ENCODE measurements at regions of chr1 and their contacts with region 1.

Region 1: GRCh38 chr1:54944610-54945544 is 35.6 kb upstream of the TMEM61 start:
- DNase-seq: peak; percentile 84
- ATAC-seq: peak; percentile 82
- H3K4me3 Mint-ChIP-seq: peak overlapping the region; percentile 12
- H3K27ac Mint-ChIP-seq: peak overlapping the region; percentile 54
- H3K4me1 Mint-ChIP-seq: peaks cover 19% of the 10 kb centered on the region
- H3K27me3 Mint-ChIP-seq: peaks cover 13% of the 10 kb centered on the region

Region 2: GRCh38 chr1:54886724-54887664 is 57.9 kb before region 1 on chr1 and contains the start of gene DHCR24:
- CTCF ChIA-PET with region 1: interaction called, 11 read pairs
- POLR2A ChIA-PET with region 1: no interaction called
- DNase-seq: peak; percentile 85
- ATAC-seq: peak; percentile 98
- H3K4me3 Mint-ChIP-seq: peak within 1 kb of the TSS; percentile 92
- H3K27ac Mint-ChIP-seq: peak within 1 kb of the TSS; percentile 89
- H3K4me1 Mint-ChIP-seq: peaks cover 46% of the 10 kb centered on the region
- H3K27me3 Mint-ChIP-seq: peaks cover 26% of the 10 kb centered on the region
- total RNA-seq, gene DHCR24: 140 to 151 TPM

Region 3: GRCh38 chr1:54934869-54935268 is 10.0 kb before region 1 on chr1:
- CTCF ChIA-PET with region 1: interaction called, 36 read pairs
- POLR2A ChIA-PET with region 1: no interaction called
- DNase-seq: no peak
- ATAC-seq: no peak
- H3K4me3 Mint-ChIP-seq: no peak overlapping the region
- H3K27ac Mint-ChIP-seq: no peak overlapping the region
- H3K4me1 Mint-ChIP-seq: peaks cover 9% of the 10 kb centered on the region
- H3K27me3 Mint-ChIP-seq: peaks cover 23% of the 10 kb centered on the region

Region 4: GRCh38 chr1:54965624-54966340 is 20.9 kb after region 1 on chr1:
- CTCF ChIA-PET with region 1: interaction called, 18 read pairs
- POLR2A ChIA-PET with region 1: no interaction called
- DNase-seq: no peak
- ATAC-seq: peak; percentile 51
- H3K4me3 Mint-ChIP-seq: no peak overlapping the region
- H3K27ac Mint-ChIP-seq: no peak overlapping the region
- H3K4me1 Mint-ChIP-seq: peaks cover 10% of the 10 kb centered on the region
- H3K27me3 Mint-ChIP-seq: peaks cover 10% of the 10 kb centered on the region

Region 5: GRCh38 chr1:54996359-54996868 is 51.5 kb after region 1 on chr1:
- CTCF ChIA-PET with region 1: interaction called, 119 read pairs
- POLR2A ChIA-PET with region 1: interaction called, 9 read pairs
- DNase-seq: peak; percentile 86
- ATAC-seq: peak; percentile 82
- H3K4me3 Mint-ChIP-seq: peak overlapping the region; percentile 42
- H3K27ac Mint-ChIP-seq: peak overlapping the region; percentile 87
- H3K4me1 Mint-ChIP-seq: peaks cover 40% of the 10 kb centered on the region
- H3K27me3 Mint-ChIP-seq: peaks cover 32% of the 10 kb centered on the region